Tibial artery (tissue), 4 donors: ENCODE measurements at regions of chr12 and their contacts with region 1.

Region 1: GRCh38 chr12:7092229-7092985 is at the start of gene C1R:
- DNase-seq: peak; percentile 89 to 92
- H3K4me3 ChIP-seq: peak within 1 kb of the TSS; percentile 57
- H3K27ac ChIP-seq: peak within 1 kb of the TSS; percentile 78 to 87
- H3K4me1 ChIP-seq: peaks cover 0 to 47% (median 38%) of the 10 kb centered on the region in 4 donors
- H3K27me3 ChIP-seq: no peaks in the 10 kb centered on the region
- CTCF ChIP-seq: peak; percentile 85 to 92

Region 2: DNA sequence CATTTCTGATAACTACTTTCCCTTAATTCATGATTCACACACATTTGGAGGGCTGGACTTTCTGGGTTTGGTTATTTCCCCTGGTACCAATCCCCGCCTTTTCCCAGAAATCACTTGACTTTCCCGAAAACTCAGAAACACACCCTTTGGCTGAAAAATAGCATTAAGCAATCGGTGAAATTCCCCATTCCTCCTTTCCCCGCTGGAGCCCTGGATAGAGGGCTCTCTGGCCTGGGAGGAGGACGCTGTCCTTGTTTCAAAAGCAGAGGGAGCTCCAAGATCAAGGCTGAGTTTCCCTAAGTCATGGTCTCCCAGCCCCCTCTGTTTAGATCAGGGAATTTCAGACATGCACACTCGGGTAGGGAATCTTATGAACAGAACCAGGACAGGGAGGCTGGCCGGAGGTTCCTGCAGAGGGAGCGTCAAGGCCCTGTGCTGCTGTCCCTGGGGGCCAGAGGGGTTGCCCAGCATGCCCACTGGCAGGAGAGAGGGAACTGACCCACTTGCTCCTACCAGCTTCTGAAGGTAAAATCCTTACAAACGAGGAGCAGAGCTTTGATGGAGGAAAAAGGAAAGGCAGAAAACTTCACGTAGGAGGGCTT is 32.0 kb before region 1 on chr12 and contains the start of gene C1S:
- intact Hi-C with region 1: loop called (anchors 2 kb)
- DNase-seq: peak; percentile 88 to 94
- H3K4me3 ChIP-seq: peak within 1 kb of the TSS; percentile 43 to 52
- H3K27ac ChIP-seq: peak within 1 kb of the TSS; percentile 77 to 85
- H3K4me1 ChIP-seq: peaks cover 0 to 35% (median 12%) of the 10 kb centered on the region in 4 donors
- H3K27me3 ChIP-seq: peaks cover 0 to 3% of the 10 kb centered on the region in 2 donors
- CTCF ChIP-seq: peak; percentile 93 to 95

Region 3: DNA sequence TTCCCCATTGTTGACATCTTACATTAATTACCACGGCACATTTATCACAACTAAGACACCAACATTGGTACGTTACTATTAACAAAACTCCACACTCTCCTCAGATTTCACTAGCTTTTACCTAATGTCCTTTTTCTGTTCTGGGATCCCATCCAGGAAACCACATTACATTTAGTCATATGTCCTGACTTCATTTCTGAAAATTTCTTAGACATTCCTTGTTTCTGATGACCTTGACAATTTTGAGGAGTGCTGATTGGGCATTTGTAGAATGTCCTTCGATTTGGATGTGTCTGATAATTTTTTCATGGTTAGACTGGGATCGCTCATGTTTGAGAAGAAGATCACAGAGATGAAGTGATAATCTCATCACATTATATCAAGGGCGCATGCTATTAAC is 176.9 kb after region 1 on chr12:
- intact Hi-C with region 1: no loop called
- DNase-seq: no peak
- H3K4me3 ChIP-seq: no peak overlapping the region
- H3K27ac ChIP-seq: no peak overlapping the region
- H3K4me1 ChIP-seq: no peaks in the 10 kb centered on the region
- H3K27me3 ChIP-seq: no peaks in the 10 kb centered on the region
- CTCF ChIP-seq: no peak

Region 4: DNA sequence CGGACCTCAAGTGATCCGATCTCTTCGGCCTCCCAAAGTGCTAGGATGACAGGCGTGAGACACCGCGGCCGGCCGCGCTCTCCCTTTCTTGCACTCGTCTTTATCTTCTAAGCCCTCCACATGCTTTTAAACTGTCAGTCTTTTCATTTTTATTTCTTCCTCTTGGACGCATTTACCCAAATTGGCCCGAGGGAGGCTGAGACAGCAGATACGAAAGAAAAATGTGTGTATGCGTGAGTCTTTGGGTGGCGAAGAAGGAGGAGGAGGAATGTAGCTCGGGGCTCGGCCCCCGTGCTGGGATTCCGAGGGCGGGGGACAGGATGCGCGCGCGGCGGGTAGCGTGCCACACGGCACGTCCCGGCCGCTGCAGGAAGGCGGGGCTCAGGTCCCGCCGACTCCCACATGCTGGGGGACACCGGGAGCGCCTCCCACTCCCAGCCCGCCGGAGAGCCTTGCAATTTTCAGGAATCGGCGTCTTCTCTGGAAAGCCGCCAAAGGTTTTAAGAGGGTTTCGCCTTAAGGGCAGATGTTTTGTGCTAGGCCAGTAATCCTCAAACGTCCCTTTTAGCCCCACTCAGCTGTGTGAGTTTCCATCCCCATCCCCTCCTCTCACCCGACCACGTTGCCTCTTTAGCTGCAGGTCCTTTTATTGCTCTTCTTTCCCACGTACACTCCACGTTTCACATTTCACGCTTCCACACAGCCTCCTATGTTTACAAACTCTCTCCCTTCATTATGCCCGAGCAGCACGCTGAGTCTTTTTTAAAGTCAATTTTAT is 878.3 kb after region 1 on chr12:
- intact Hi-C with region 1: loop called (anchors 5 kb)
- DNase-seq: peak; percentile 87 to 96
- H3K4me3 ChIP-seq: peak overlapping the region; percentile 51 to 59
- H3K27ac ChIP-seq: peak overlapping the region; percentile 78 to 80
- H3K4me1 ChIP-seq: peaks cover 0 to 17% (median 8%) of the 10 kb centered on the region in 4 donors
- H3K27me3 ChIP-seq: no peaks in the 10 kb centered on the region
- CTCF ChIP-seq: peak in 1 of 2 experiments; percentile 42